Natural killer cell (primary cell): ENCODE measurements at regions of chr2 and their contacts with region 1.

Region 1: GRCh38 chr2:227324995-227325838 is at the start of gene MFF:
- DNase-seq: peak; percentile 93 to 98
- ATAC-seq: peak; percentile 95 to 99 (median 97)
- H3K4me3 ChIP-seq: peak within 1 kb of the TSS; percentile 78
- H3K4me3 Mint-ChIP-seq: peak within 1 kb of the TSS; percentile 91
- H3K27ac ChIP-seq: peak within 1 kb of the TSS; percentile 67
- H3K27ac Mint-ChIP-seq: peak within 1 kb of the TSS; percentile 82 to 85
- H3K4me1 ChIP-seq: peaks cover 29% of the 10 kb centered on the region
- H3K4me1 Mint-ChIP-seq: peaks cover 48 to 55% of the 10 kb centered on the region in 2 donors
- H3K27me3 ChIP-seq: no peaks in the 10 kb centered on the region
- H3K27me3 Mint-ChIP-seq: no peaks in the 10 kb centered on the region
- CTCF ChIP-seq: peak; percentile 23
- total RNA-seq, gene MFF: 57.7 to 60.8 (median 59.8) TPM

Region 2: DNA sequence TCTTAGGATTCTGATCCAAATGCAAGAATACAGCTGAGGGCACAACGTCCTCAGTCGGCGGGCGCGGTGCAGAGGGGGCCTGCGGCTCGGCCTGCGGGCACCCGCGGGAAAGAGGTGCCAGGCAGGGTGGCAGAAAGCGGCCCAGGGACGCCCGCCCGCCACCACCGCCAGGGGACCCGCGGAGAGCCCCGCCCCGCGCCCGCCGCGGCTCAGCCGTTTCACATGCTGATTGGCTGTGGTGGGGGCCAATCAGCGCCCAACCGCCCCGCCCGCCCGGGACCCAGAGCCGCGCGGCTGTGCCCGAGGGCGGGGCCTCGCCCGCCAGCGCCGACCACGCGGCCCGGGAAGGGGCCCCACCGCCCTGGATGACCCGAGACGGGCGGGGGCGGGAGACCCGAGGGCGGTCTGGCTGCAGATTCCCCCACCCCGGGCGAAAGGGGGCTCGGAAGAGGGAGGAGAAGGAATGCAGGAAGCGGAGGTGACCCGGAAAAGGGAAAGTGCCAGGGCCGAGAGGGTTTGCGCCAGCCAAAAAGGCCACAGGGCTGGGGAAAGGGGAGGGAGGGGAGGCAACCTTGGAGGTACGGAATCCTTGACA is 533.6 kb before region 1 on chr2:
- intact Hi-C with region 1: loop called (anchors 2 kb)
- DNase-seq: peak; percentile 82 to 93
- ATAC-seq: peak; percentile 94 to 96 (median 96)
- H3K4me3 ChIP-seq: peak overlapping the region; percentile 71
- H3K4me3 Mint-ChIP-seq: peak overlapping the region; percentile 94
- H3K27ac ChIP-seq: peak overlapping the region; percentile 83
- H3K27ac Mint-ChIP-seq: peak overlapping the region; percentile 86 to 89
- H3K4me1 ChIP-seq: peaks cover 16% of the 10 kb centered on the region
- H3K4me1 Mint-ChIP-seq: peaks cover 9 to 14% of the 10 kb centered on the region in 2 donors
- H3K27me3 ChIP-seq: no peaks in the 10 kb centered on the region
- H3K27me3 Mint-ChIP-seq: peaks cover 16 to 42% of the 10 kb centered on the region in 2 donors
- CTCF ChIP-seq: peak; percentile 24

Region 3: GRCh38 chr2:226835796-226836547 is 489.2 kb before region 1 on chr2 and contains the start of gene RHBDD1:
- intact Hi-C with region 1: loop called (anchors 1 kb)
- DNase-seq: peak; percentile 88 to 98
- ATAC-seq: peak; percentile 86 to 97 (median 88)
- H3K4me3 ChIP-seq: peak within 1 kb of the TSS; percentile 56
- H3K4me3 Mint-ChIP-seq: peak within 1 kb of the TSS; percentile 89
- H3K27ac ChIP-seq: peak within 1 kb of the TSS; percentile 91
- H3K27ac Mint-ChIP-seq: peak within 1 kb of the TSS; percentile 96 to 99
- H3K4me1 ChIP-seq: peaks cover 24% of the 10 kb centered on the region
- H3K4me1 Mint-ChIP-seq: peaks cover 20 to 23% of the 10 kb centered on the region in 2 donors
- H3K27me3 ChIP-seq: no peaks in the 10 kb centered on the region
- H3K27me3 Mint-ChIP-seq: peaks cover 0 to 4% of the 10 kb centered on the region in 2 donors
- CTCF ChIP-seq: no peak
- total RNA-seq, gene RHBDD1: 33.7 to 49.7 (median 47.7) TPM

Region 4: DNA sequence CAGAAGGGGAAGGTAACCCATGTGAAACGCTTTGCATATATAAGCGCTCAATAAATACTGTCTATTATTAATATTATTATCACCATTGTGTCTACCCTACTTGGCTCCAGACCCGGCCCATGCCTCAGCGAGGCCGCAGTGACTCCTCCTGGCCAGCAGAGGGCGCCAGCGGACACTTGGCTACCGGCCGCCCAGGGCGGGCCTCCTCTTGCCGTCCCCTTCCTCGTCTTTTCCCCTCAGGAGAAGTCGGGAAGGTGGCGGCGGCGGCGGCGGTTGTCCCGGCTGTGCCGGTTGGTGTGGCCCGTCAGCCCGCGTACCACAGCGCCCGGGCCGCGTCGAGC is 146.7 kb after region 1 on chr2 and contains the start of gene AGFG1:
- intact Hi-C with region 1: loop called (anchors 10 kb)
- DNase-seq: peak; percentile 86 to 89
- ATAC-seq: peak; percentile 89 to 97 (median 92)
- H3K4me3 ChIP-seq: peak within 1 kb of the TSS; percentile 81
- H3K4me3 Mint-ChIP-seq: peak within 1 kb of the TSS; percentile 95
- H3K27ac ChIP-seq: peak within 1 kb of the TSS; percentile 71
- H3K27ac Mint-ChIP-seq: peak within 1 kb of the TSS; percentile 74 to 83
- H3K4me1 ChIP-seq: peaks cover 8% of the 10 kb centered on the region
- H3K4me1 Mint-ChIP-seq: peaks cover 22 to 37% of the 10 kb centered on the region in 2 donors
- H3K27me3 ChIP-seq: no peaks in the 10 kb centered on the region
- H3K27me3 Mint-ChIP-seq: peaks cover 3 to 7% of the 10 kb centered on the region in 2 donors
- CTCF ChIP-seq: peak; percentile 97
- total RNA-seq, gene AGFG1: 65.0 to 71.6 (median 67.3) TPM